WTC11 (cell line): ENCODE measurements at regions of chr11 and their contacts with region 1.

Region 1: GRCh38 chr11:18115360-18116127 is 9.7 kb upstream of the SAAL1 start:
- DNase-seq: peak; percentile 83
- ATAC-seq: peak; percentile 99
- H3K4me3 Mint-ChIP-seq: 0 out of 2 replicates have a peak overlapping the region, but pooled peaks have one; percentile 25
- H3K27ac Mint-ChIP-seq: no peak overlapping the region
- H3K4me1 Mint-ChIP-seq: no peaks in the 10 kb centered on the region
- H3K27me3 Mint-ChIP-seq: peaks cover 43% of the 10 kb centered on the region
- CTCF ChIP-seq: peak; percentile 87

Region 2: DNA sequence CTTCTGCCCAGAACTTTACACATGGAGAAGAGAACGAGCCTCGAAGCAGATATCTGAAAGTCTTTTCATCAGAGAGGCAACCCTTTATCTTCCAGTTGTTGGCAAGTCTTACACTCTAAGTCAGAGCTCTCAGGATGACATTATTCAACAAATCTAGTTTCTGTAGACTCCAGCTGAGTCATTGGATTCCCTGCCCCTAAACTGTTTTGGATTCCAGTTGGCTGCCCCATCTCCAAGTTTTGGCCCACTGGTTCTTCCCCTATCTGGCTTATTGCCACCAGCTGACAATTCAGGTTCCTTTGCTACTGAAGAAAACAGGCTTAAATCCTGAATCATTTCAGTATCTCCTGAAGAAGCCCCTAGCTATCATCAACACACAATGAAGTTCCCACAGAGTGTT is 23.8 kb before region 1 on chr11:
- CTCF ChIA-PET with region 1: interaction called, 11 read pairs
- POLR2A ChIA-PET with region 1: interaction called, 4 read pairs
- DNase-seq: no peak
- ATAC-seq: no peak
- H3K4me3 Mint-ChIP-seq: no peak overlapping the region
- H3K27ac Mint-ChIP-seq: no peak overlapping the region
- H3K4me1 Mint-ChIP-seq: no peaks in the 10 kb centered on the region
- H3K27me3 Mint-ChIP-seq: no peaks in the 10 kb centered on the region
- CTCF ChIP-seq: no peak

Region 3: GRCh38 chr11:18171377-18172000 is 55.9 kb after region 1 on chr11:
- CTCF ChIA-PET with region 1: interaction called, 26 read pairs
- POLR2A ChIA-PET with region 1: no interaction called
- DNase-seq: peak; percentile 53
- ATAC-seq: peak; percentile 94
- H3K4me3 Mint-ChIP-seq: no peak overlapping the region
- H3K27ac Mint-ChIP-seq: no peak overlapping the region
- H3K4me1 Mint-ChIP-seq: no peaks in the 10 kb centered on the region
- H3K27me3 Mint-ChIP-seq: no peaks in the 10 kb centered on the region; the same call in none of the 2 replicates
- CTCF ChIP-seq: peak; percentile 49

Region 4: GRCh38 chr11:18193010-18193409 is 77.5 kb after region 1 on chr11:
- CTCF ChIA-PET with region 1: interaction called, 21 read pairs
- POLR2A ChIA-PET with region 1: no interaction called
- DNase-seq: peak; percentile 56
- ATAC-seq: peak; percentile 100
- H3K4me3 Mint-ChIP-seq: no peak overlapping the region
- H3K27ac Mint-ChIP-seq: no peak overlapping the region
- H3K4me1 Mint-ChIP-seq: peaks cover 12% of the 10 kb centered on the region
- H3K27me3 Mint-ChIP-seq: peaks cover 4% of the 10 kb centered on the region; the same call in 1 of the 2 replicates
- CTCF ChIP-seq: no peak

Region 5: GRCh38 chr11:18209058-18209457 is 93.5 kb after region 1 on chr11:
- CTCF ChIA-PET with region 1: interaction called, 194 read pairs
- POLR2A ChIA-PET with region 1: interaction called, 3 read pairs
- DNase-seq: no peak
- ATAC-seq: no peak
- H3K4me3 Mint-ChIP-seq: no peak overlapping the region
- H3K27ac Mint-ChIP-seq: no peak overlapping the region
- H3K4me1 Mint-ChIP-seq: no peaks in the 10 kb centered on the region
- H3K27me3 Mint-ChIP-seq: peaks cover 15% of the 10 kb centered on the region
- CTCF ChIP-seq: no peak

Region 6: GRCh38 chr11:18243783-18244362 is 128.3 kb after region 1 on chr11:
- CTCF ChIA-PET with region 1: interaction called, 19 read pairs
- POLR2A ChIA-PET with region 1: no interaction called
- DNase-seq: peak; percentile 70
- ATAC-seq: peak; percentile 89
- H3K4me3 Mint-ChIP-seq: no peak overlapping the region
- H3K27ac Mint-ChIP-seq: no peak overlapping the region
- H3K4me1 Mint-ChIP-seq: no peaks in the 10 kb centered on the region
- H3K27me3 Mint-ChIP-seq: peaks cover 6% of the 10 kb centered on the region; the same call in 1 of the 2 replicates
- CTCF ChIP-seq: peak; percentile 89

Region 7: DNA sequence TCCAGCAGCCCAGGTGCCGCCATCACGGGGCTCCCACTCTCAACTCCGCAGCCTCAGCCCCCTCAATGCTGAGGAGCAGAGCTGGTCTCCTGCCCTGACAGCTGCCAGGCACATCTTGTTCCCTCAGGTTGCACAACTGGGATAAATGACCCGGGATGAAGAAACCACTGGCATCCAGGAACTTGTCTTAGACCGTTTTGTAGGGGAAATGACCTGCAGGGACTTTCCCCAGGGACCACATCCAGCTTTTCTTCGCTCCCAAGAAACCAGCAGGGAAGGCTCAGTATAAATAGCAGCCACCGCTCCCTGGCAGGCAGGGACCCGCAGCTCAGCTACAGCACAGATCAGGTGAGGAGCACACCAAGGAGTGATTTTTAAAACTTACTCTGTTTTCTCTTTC is 150.4 kb after region 1 on chr11 and contains the start of gene SAA1:
- CTCF ChIA-PET with region 1: interaction called, 10 read pairs
- POLR2A ChIA-PET with region 1: no interaction called
- DNase-seq: no peak
- ATAC-seq: no peak
- H3K4me3 Mint-ChIP-seq: no peak within 1 kb of the TSS
- H3K27ac Mint-ChIP-seq: no peak within 1 kb of the TSS
- H3K4me1 Mint-ChIP-seq: peaks cover 7% of the 10 kb centered on the region; the same call in 1 of the 2 replicates
- H3K27me3 Mint-ChIP-seq: no peaks in the 10 kb centered on the region
- CTCF ChIP-seq: no peak
- total RNA-seq, gene SAA1: 7.7 to 12.8 TPM (median 8.8 TPM) in 3 replicates